Right cardiac atrium (tissue), 5 donors: ENCODE measurements at regions of chr1 and their contacts with region 1.

Region 1: DNA sequence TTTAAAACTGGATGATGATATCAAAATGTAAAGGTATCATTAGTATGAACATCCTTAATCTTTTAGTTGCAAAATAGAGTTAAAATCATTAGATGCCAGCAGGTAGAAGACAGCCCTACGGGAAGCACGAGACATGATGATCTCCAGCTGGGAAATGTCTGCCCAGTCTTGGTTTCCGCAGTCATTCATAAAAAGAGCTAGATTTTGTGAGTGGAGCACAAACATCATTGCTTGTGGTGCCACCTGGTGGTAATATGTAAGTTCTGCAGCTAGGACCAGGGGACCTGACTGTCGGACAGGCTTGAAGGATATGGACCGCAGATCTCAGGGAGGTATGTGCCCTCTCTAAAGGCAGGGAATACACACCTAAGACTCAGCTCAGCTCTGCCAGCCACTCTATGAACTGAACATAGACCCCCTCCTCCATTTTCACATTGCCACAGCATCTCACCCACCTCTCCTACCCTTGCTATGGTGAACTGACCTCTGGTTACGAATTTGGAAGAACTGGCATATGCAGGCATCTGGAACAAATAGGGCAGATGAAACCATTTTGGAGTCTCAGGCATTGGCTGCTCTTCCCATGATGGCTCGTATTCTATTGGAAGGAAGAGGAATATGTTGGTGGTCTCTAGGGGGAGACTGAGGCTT is 9.2 kb downstream of the FCMR start:
- DNase-seq: peak; percentile 38 to 74 (median 60)
- ATAC-seq: peak; percentile 61 to 67
- H3K4me3 ChIP-seq: no peak overlapping the region
- H3K27ac ChIP-seq: no peak overlapping the region
- H3K4me1 ChIP-seq: no peaks in the 10 kb centered on the region
- H3K27me3 ChIP-seq: no peaks in the 10 kb centered on the region

Region 2: DNA sequence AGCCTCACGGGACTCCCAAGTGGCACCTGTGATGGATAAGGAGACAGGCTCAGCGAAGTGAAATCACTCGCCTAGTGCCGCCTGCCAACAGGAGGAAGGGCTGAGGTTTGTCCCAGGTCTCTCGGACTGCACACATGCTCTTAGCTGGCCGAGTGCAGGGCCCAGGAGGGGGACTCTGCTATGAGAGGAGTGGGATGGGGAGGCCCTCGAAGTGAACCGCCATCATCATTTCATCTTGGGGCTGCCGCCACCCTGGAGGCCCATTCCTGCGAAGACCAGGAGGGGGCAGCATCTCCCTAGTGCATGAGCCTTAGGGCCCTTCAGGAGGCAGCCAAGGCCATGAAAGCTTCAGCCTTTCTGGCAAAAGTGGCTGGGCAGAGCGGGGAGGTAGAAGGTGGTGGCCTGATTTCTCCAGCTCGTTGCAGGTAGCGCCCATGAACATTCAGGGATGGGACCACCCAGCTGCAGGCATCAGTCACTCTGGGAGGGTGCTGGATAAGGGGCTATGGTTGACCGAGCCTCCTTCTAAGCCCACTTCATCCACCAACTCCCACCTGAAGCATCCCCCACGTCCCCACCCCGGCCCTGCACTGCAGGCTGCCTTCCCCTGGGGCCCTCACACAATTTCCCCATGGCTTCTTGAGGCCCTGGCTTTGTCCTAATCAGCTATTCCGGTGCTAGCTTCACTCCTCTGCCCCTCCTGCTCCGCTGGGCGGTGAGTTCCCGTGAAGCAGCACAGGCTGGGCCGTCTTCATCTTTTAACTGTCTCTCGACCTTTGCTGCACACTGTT is 422.4 kb before region 1 on chr1:
- intact Hi-C with region 1: loop called in 1 of 4 experiments (anchors 10 kb)
- DNase-seq: peak; percentile 76 to 93 (median 90)
- ATAC-seq: peak; percentile 81 to 82
- H3K4me3 ChIP-seq: no peak overlapping the region
- H3K27ac ChIP-seq: no peak overlapping the region
- H3K4me1 ChIP-seq: peaks cover 3% of the 10 kb centered on the region
- H3K27me3 ChIP-seq: no peaks in the 10 kb centered on the region

Region 3: GRCh38 chr1:206635080-206635977 is 277.2 kb before region 1 on chr1 and contains the start of gene DYRK3:
- intact Hi-C with region 1: loop called in 2 of 4 experiments (anchors 5 kb)
- DNase-seq: peak; percentile 98
- ATAC-seq: peak; percentile 99
- H3K4me3 ChIP-seq: peak within 1 kb of the TSS; percentile 67
- H3K27ac ChIP-seq: peak within 1 kb of the TSS; percentile 68
- H3K4me1 ChIP-seq: peaks cover 2% of the 10 kb centered on the region
- H3K27me3 ChIP-seq: no peaks in the 10 kb centered on the region
- total RNA-seq, gene DYRK3: 15.7 to 29.8 (median 23.4) TPM

Region 4: GRCh38 chr1:206734499-206735142 is 177.9 kb before region 1 on chr1:
- intact Hi-C with region 1: loop called (anchors 5 to 10 kb)
- DNase-seq: peak; percentile 41 to 82 (median 76)
- ATAC-seq: peak; percentile 30 to 31
- H3K4me3 ChIP-seq: no peak overlapping the region
- H3K27ac ChIP-seq: peak overlapping the region; percentile 18
- H3K4me1 ChIP-seq: peaks cover 25% of the 10 kb centered on the region
- H3K27me3 ChIP-seq: no peaks in the 10 kb centered on the region

Region 5: GRCh38 chr1:206967096-206967849 is 54.7 kb after region 1 on chr1:
- intact Hi-C with region 1: no loop called
- DNase-seq: no peak
- ATAC-seq: no peak
- H3K4me3 ChIP-seq: no peak overlapping the region
- H3K27ac ChIP-seq: no peak overlapping the region
- H3K4me1 ChIP-seq: no peaks in the 10 kb centered on the region
- H3K27me3 ChIP-seq: no peaks in the 10 kb centered on the region